PC-9 (cell line): ENCODE measurements at regions of chr18 and their contacts with region 1.

Region 1: GRCh38 chr18:21391074-21391673 is 149.1 kb downstream of the GREB1L start:
- DNase-seq: peak; percentile 45 to 99
- H3K4me3 ChIP-seq: no peak overlapping the region
- H3K27ac ChIP-seq: peak overlapping the region; percentile 95
- H3K4me1 ChIP-seq: peaks cover 31% of the 10 kb centered on the region
- H3K27me3 ChIP-seq: no peaks in the 10 kb centered on the region
- CTCF ChIP-seq: no peak

Region 2: DNA sequence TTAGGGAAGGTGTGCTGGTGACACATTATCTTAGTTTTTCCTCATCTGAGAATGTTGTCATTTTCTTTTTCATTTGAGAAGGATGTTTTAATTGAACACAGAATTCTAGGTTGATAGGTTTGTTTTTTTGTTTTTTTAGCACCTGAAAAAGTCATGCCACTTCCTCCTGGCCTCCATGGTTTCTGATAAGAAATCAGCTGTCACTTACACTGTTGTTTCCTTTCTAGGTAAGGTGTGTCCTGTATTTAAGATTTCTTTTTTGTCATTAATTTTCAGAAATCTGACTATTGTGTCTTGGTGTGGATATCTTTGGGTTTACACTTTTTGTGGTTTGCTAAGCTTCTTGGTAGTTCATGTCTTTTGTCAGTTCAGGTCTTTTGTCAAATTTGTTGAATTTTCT is 378.9 kb before region 1 on chr18:
- CTCF ChIA-PET with region 1: no interaction called
- POLR2A ChIA-PET with region 1: no interaction called
- intact Hi-C with region 1: no loop called
- DNase-seq: no peak
- H3K4me3 ChIP-seq: no peak overlapping the region
- H3K27ac ChIP-seq: no peak overlapping the region
- H3K4me1 ChIP-seq: no peaks in the 10 kb centered on the region
- H3K27me3 ChIP-seq: no peaks in the 10 kb centered on the region
- CTCF ChIP-seq: no peak

Region 3: DNA sequence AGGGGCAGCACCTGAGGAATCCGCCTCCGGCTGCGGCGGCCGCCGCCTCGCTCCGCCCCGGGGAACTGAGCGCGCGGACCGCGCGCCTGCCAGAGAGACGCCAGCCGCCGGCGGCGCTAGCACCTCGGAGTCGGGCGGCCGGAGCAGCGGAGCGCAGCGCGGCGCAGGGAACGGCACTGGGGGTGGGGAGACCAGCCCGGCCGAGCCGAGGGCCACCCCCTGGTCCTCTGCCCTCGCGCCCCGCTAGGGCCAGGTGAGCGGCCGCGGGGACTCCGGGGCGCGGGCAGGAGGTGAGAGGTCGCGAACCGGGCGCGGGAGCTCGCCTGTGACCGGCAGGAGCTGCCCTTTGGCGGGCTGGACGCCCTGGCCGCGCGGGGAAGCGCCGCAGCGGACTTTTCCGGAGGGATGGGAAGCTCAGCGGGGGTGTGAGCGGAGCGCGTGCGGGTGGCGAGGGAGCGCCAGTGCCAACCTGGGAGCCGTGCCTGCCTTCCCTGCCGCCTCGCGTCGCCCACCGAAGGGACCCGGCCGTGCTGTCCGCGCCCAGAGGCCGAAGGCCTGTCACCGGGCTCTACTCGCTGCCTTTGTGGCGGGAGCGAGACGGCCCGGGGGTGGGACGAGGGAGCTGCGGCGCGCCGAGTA is 148.9 kb before region 1 on chr18 and contains the start of gene GREB1L:
- CTCF ChIA-PET with region 1: no interaction called
- POLR2A ChIA-PET with region 1: no interaction called
- intact Hi-C with region 1: loop called (anchors 1 kb)
- DNase-seq: peak; percentile 38 to 73
- H3K4me3 ChIP-seq: peak within 1 kb of the TSS; percentile 62
- H3K27ac ChIP-seq: no peak within 1 kb of the TSS
- H3K4me1 ChIP-seq: 0 out of 2 replicates have a peak, but pooled peaks cover 7% of the 10 kb centered on the region
- H3K27me3 ChIP-seq: no peaks in the 10 kb centered on the region
- CTCF ChIP-seq: no peak; the same call in 1 of the 2 replicates
- total RNA-seq, gene GREB1L: 3.6 and 6.0 TPM in 2 replicates

Region 4: GRCh38 chr18:21330122-21330701 is 61.0 kb before region 1 on chr18:
- CTCF ChIA-PET with region 1: no interaction called
- POLR2A ChIA-PET with region 1: no interaction called
- intact Hi-C with region 1: loop called (anchors 10 kb)
- DNase-seq: peak; percentile 32 to 88
- H3K4me3 ChIP-seq: peak overlapping the region; percentile 37; the same call in 1 of the 2 replicates
- H3K27ac ChIP-seq: peak overlapping the region; percentile 93
- H3K4me1 ChIP-seq: peaks cover 58% of the 10 kb centered on the region
- H3K27me3 ChIP-seq: no peaks in the 10 kb centered on the region
- CTCF ChIP-seq: no peak

Region 5: DNA sequence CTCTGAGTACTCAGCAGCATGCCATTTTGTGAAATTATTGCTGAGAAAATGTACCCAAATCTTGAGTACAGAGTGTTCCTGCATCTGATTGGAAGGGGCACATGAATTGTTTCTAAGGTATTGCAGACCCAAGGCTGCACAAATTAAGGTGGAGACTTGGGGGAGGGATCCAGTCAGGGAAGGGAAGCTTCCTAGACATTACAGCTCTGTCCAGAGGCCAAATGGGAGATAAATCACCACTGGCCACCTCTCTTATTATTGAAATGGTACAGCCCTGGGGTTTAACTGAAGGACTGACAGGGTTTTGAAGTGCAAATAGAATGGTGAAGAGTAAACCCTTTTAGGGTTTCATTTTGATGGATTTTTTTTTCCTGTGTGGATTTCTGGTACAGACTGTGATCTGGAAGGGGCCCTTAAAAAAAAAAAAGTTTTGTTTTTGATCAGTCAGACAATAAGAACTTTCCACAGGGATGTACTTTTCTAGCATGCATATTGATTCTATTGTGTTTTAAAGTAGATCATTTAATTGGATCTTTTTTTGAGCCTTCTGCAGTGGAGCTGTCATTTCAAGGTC is 29.8 kb before region 1 on chr18:
- CTCF ChIA-PET with region 1: no interaction called
- POLR2A ChIA-PET with region 1: no interaction called
- intact Hi-C with region 1: no loop called
- DNase-seq: no peak
- H3K4me3 ChIP-seq: no peak overlapping the region
- H3K27ac ChIP-seq: no peak overlapping the region
- H3K4me1 ChIP-seq: no peaks in the 10 kb centered on the region
- H3K27me3 ChIP-seq: no peaks in the 10 kb centered on the region
- CTCF ChIP-seq: no peak

Region 6: DNA sequence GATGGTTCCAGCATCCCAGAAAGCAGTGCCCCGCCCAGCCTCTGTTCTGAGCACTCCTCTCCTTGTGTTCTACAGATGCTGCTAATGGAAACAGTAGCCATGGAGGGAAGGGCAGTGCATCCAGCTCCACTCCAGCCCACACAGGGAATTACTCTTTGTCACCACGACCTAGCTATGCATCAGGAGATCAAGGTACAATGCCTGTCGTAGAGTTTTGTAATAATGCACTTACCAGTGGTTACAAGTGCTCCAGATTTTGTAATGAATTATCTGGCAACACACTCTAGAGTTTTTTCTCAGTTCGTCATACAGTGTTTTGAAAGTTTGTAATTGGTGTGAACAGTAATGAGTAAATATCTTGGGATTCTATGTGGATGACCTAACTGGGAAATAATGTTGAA is 48.3 kb after region 1 on chr18:
- CTCF ChIA-PET with region 1: no interaction called
- POLR2A ChIA-PET with region 1: no interaction called
- intact Hi-C with region 1: loop called (anchors 2 kb)
- DNase-seq: peak; percentile 21 to 94
- H3K4me3 ChIP-seq: no peak overlapping the region
- H3K27ac ChIP-seq: peak overlapping the region; percentile 96
- H3K4me1 ChIP-seq: peaks cover 35% of the 10 kb centered on the region
- H3K27me3 ChIP-seq: no peaks in the 10 kb centered on the region
- CTCF ChIP-seq: no peak

Region 7: DNA sequence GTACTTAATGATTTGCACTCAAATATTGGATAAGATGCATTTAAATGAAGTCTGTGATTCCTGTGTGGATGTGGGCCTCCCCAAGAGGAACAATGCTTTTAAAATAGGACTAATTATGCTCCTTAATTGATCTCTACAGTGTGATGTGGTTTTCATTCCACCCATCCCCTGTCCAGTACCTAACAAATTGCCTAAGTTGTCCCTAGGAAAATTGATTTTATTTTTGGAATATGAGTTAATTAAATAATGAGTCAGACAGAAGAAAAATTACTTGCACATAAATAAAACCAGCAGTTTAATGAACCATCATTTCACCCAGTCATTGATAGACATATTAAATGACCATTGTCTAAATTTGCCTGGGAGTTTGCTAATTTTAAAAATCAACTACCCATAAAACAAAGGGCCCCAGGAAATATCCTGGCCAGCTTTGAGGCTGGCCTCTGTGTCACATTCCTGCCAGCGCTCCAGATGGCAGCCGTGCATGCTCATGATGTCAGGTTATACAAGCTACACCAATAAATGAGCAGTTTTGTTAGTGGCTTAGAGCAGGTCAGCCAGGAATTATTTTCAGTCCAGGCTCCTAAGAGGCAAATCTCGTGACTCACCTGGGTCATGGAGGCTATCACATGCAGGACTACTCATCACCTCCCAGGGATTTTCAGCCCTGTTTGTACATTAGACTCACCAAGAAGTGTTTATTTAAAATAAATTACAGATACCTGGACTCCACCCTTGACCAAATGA is 281.5 kb after region 1 on chr18:
- CTCF ChIA-PET with region 1: no interaction called
- POLR2A ChIA-PET with region 1: no interaction called
- intact Hi-C with region 1: no loop called
- DNase-seq: peak; percentile 62 to 94
- H3K4me3 ChIP-seq: no peak overlapping the region
- H3K27ac ChIP-seq: peak overlapping the region; percentile 91
- H3K4me1 ChIP-seq: peaks cover 79% of the 10 kb centered on the region
- H3K27me3 ChIP-seq: no peaks in the 10 kb centered on the region
- CTCF ChIP-seq: no peak